Ovary (tissue), 10 donors: ENCODE measurements at regions of chr2 and their contacts with region 1.

Region 1: GRCh38 chr2:140567734-140568133 is 1563.1 kb downstream of the LRP1B start:
- DNase-seq: no peak
- H3K4me3 ChIP-seq: no peak overlapping the region
- H3K27ac ChIP-seq: no peak overlapping the region
- H3K4me1 ChIP-seq: no peaks in the 10 kb centered on the region
- H3K27me3 ChIP-seq: no peaks in the 10 kb centered on the region
- CTCF ChIP-seq: no peak
- EP300 ChIP-seq: no peak
- POLR2A ChIP-seq: no peak

Region 2: GRCh38 chr2:140376686-140377085 is 191.0 kb before region 1 on chr2:
- intact Hi-C with region 1: loop called in 1 of 4 experiments (anchors 5 kb)
- DNase-seq: no peak
- H3K4me3 ChIP-seq: no peak overlapping the region
- H3K27ac ChIP-seq: no peak overlapping the region
- H3K4me1 ChIP-seq: no peaks in the 10 kb centered on the region
- H3K27me3 ChIP-seq: no peaks in the 10 kb centered on the region
- CTCF ChIP-seq: no peak
- EP300 ChIP-seq: no peak
- POLR2A ChIP-seq: no peak